ENCODE measurements at regions of chr12 and their contacts with region 1.

Region 1: DNA sequence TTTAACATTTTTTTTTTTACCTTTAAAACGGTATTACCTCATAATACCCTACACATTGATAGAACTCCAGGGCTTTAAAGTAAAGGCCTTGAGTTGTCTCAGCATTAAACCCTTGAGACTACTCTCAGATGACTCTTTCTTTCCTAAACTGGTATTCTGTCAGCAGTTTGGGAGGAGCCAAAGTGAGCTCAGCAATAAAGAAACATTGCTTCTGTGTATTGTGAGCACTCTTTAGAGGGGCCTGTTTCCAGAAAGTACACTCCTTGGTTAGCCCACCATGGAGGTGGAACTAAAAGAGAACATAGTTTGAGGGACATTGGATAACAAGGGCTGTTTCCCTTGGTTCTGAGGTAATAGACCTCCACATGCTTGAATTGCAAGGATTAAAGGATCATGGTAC is 20.4 kb downstream of the MAP3K12 start:
- DNase-seq: no peak
- H3K4me3 Mint-ChIP-seq: no peak overlapping the region
- H3K27ac Mint-ChIP-seq: no peak overlapping the region
- H3K4me1 Mint-ChIP-seq: peaks cover 18% of the 10 kb centered on the region
- H3K27me3 Mint-ChIP-seq: no peaks in the 10 kb centered on the region

Region 2: DNA sequence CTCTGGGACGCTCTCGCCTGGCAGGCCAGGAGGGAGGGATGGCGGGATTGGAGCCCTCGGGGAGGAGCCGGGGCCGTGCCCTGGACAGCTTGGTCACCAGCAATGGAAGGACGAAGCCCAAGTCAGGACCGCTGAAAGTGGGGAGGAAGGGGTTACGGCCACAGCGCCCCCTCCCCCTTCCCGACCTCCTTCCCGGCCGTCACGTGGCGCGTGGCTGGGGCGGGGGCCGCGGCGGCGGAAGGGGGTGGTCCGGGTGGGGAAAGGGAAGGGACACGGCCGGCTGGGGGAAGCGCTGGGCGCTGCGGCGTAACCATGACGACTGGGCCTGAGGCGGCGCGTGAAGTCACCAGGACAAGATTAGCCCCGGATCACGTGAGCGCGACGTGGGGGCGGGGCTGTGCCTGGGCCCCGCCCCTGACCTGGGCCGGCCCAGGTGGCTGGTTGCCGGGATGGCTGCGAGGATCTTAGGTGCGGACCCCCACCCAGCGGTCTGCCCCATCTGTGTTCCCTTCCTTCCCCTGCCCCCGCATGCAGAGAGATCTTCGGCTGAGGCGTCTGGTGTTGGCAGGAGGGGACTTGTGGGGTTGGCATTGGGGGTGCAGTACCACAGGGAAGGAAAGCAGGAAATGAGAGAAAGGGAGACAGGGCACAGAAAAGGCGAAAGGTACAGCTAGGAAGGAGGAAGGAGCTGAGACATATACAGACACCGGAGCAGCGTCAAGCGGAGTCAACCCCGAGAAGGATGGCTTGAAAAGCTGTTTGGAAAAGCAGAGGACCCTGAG is 14.2 kb after region 1 on chr12:
- intact Hi-C with region 1: loop called (anchors 2 kb)
- DNase-seq: peak; percentile 82
- H3K4me3 Mint-ChIP-seq: peak overlapping the region; percentile 89
- H3K27ac Mint-ChIP-seq: peak overlapping the region; percentile 51
- H3K4me1 Mint-ChIP-seq: peaks cover 17% of the 10 kb centered on the region
- H3K27me3 Mint-ChIP-seq: no peaks in the 10 kb centered on the region